ENCODE measurements at regions of chr9 and their contacts with region 1.

Region 1: DNA sequence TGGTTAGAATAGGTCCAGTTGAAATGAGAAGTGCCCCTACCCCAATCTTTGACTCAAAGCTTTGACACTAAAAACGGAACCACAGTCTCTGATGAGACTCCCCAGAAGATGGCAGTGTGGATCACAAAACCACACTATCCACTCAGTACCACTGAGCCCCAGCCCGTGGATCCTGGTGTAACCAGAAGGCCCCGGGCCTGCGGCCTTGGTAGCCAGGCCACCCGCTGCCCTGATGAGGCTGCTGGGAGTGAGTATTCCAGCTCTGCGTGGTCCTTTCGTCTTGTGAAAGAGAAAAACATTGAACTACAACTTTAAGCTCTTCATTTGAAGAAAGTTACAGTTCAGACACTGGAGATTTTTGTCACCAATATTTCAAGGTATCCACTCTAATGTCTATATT is 42.2 kb upstream of the FBP1 start:
- DNase-seq: peak; percentile 67
- H3K4me3 ChIP-seq: no peak overlapping the region
- H3K27ac ChIP-seq: no peak overlapping the region
- H3K4me1 ChIP-seq: no peaks in the 10 kb centered on the region
- H3K27me3 ChIP-seq: peaks cover 3 to 4% of the 10 kb centered on the region in 2 experiments
- CTCF ChIP-seq: peak; percentile 68 to 74
- POLR2A ChIP-seq: no peak

Region 2: DNA sequence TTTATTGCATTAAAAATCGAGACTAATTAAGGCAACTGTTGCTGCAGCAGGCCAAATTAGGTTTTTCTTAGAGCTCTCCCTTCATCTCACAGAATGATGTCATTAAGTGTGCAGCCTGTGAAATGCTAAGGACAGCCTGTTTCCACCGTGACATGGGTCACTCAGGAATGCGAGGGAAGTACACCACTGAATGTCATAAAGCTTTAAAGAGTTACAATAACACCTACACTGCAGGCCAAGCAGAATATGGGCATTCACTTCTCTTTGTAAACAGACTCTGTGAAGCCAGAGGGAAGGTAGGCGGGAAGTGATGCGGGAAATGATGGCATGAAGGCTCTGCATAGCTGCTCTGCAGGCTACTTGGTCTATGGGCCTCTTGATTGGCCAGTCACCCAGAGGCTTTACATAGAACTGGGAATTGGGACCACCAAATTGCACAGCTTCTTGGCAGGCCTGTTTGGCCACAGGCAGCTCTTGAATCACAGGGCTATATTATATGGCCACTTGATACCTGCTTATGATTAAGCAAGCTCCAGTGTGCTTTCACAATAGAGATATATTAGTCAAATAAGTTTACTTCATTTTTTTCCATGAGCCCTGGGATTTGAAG is 16.6 kb after region 1 on chr9:
- CTCF ChIA-PET with region 1: interaction called, 12 read pairs
- POLR2A ChIA-PET with region 1: no interaction called
- dilution Hi-C with region 1: no loop called
- intact Hi-C with region 1: no loop called
- DNase-seq: no peak
- H3K4me3 ChIP-seq: no peak overlapping the region
- H3K27ac ChIP-seq: no peak overlapping the region
- H3K4me1 ChIP-seq: no peaks in the 10 kb centered on the region
- H3K27me3 ChIP-seq: peaks cover 3 to 13% of the 10 kb centered on the region in 2 experiments
- CTCF ChIP-seq: no peak
- POLR2A ChIP-seq: no peak

Region 3: GRCh38 chr9:95025213-95026147 is 344.0 kb after region 1 on chr9:
- CTCF ChIA-PET with region 1: interaction called, 23 read pairs
- POLR2A ChIA-PET with region 1: no interaction called
- dilution Hi-C with region 1: no loop called
- intact Hi-C with region 1: no loop called
- DNase-seq: peak; percentile 89
- H3K4me3 ChIP-seq: peak overlapping the region in 1 of 3 experiments; percentile 20
- H3K27ac ChIP-seq: peak overlapping the region; percentile 7
- H3K4me1 ChIP-seq: peaks cover 38% of the 10 kb centered on the region
- H3K27me3 ChIP-seq: no peaks in the 10 kb centered on the region
- CTCF ChIP-seq: peak in 1 of 2 donors; percentile 33
- POLR2A ChIP-seq: no peak

Region 4: GRCh38 chr9:95073021-95073607 is 391.6 kb after region 1 on chr9:
- CTCF ChIA-PET with region 1: interaction called, 27 read pairs
- POLR2A ChIA-PET with region 1: no interaction called
- dilution Hi-C with region 1: no loop called
- intact Hi-C with region 1: loop called (anchors 1 kb)
- DNase-seq: no peak
- H3K4me3 ChIP-seq: no peak overlapping the region
- H3K27ac ChIP-seq: no peak overlapping the region
- H3K4me1 ChIP-seq: no peaks in the 10 kb centered on the region
- H3K27me3 ChIP-seq: no peaks in the 10 kb centered on the region
- CTCF ChIP-seq: peak in 1 of 2 donors; percentile 44
- POLR2A ChIP-seq: no peak

Region 5: DNA sequence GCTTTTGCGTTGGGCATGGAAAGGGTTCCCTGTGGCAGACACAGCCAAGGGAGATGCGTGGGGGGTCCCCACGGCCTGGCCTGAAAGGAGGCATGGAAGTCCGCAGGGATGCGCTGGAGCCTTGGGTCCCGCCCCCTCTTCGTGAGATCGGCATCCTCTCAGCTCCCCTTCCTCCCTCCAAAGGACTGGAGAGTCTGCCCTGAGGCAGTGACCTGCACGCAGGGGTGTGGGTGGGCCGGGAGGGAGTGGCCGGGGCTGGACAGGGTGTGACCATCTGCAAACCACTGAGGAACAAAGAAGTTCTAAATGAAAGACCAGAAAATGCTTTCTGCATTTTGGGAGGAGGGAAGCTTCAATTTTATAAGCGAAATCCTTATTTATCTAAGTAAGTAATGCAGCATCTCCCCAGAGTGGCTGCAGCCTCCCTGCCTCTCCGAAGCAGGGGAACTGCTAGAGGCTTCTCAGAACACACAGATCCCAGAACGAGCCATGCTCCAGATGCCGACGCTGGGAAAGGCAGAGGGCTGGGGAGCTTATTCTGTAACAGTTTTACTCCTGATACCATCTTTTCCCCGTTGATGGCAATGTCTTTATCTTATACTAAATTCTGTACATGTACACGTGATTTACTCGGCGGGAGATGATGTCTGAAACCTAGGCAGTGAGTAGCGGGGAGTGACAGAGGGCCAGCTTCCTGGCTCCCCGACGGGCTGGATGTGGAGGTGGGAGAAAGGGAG is 414.3 kb after region 1 on chr9:
- CTCF ChIA-PET with region 1: interaction called, 13 read pairs
- POLR2A ChIA-PET with region 1: no interaction called
- dilution Hi-C with region 1: no loop called
- intact Hi-C with region 1: no loop called
- DNase-seq: no peak
- H3K4me3 ChIP-seq: no peak overlapping the region
- H3K27ac ChIP-seq: no peak overlapping the region
- H3K4me1 ChIP-seq: peaks cover 6% of the 10 kb centered on the region
- H3K27me3 ChIP-seq: no peaks in the 10 kb centered on the region
- CTCF ChIP-seq: no peak
- POLR2A ChIP-seq: no peak

Region 6: DNA sequence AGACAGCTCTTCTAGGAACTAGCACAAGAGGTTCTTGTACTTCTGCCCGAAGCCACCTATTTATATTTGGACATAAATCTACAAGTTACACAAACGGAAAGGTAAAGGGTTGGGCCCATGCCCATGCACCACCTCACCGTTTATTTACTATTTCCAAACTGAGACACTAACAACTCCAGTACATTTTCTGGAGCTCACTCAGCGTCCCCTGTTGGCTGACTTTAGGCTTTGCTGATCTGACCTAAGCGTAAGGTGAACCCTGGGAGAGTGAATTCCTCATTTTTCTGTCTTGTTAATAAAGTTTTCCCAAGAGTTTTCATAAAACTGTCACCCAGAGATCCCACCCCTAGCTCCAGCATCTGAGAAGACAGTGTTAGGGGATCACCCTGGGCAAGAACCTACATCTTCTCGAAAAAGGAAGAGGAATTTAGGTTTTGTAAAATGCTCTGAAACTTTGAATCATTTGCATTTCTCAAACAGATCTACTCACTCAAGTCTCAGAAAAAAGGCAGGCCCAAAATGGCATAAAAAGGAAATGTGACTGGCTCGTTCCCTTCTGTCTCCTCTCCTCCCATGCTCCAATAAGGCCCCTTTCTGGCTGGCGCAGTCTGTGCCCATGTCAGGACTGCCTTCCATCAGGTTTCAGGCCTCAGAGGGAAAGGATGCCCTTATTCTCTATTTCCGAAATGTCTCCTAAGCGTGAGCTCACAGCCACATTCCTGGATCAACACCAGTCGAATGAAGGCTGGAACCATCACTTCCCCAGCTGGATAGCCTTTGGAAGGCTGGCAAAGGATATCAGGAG is 434.7 kb after region 1 on chr9:
- CTCF ChIA-PET with region 1: interaction called, 10 read pairs
- POLR2A ChIA-PET with region 1: no interaction called
- dilution Hi-C with region 1: no loop called
- intact Hi-C with region 1: no loop called
- DNase-seq: no peak
- H3K4me3 ChIP-seq: no peak overlapping the region
- H3K27ac ChIP-seq: no peak overlapping the region
- H3K4me1 ChIP-seq: no peaks in the 10 kb centered on the region
- H3K27me3 ChIP-seq: no peaks in the 10 kb centered on the region
- CTCF ChIP-seq: no peak
- POLR2A ChIP-seq: no peak

Region 7: GRCh38 chr9:95268681-95269080 is 587.2 kb after region 1 on chr9:
- CTCF ChIA-PET with region 1: interaction called, 12 read pairs
- POLR2A ChIA-PET with region 1: no interaction called
- dilution Hi-C with region 1: no loop called
- intact Hi-C with region 1: loop called (anchors 1 kb)
- DNase-seq: peak; percentile 47
- H3K4me3 ChIP-seq: no peak overlapping the region
- H3K27ac ChIP-seq: no peak overlapping the region
- H3K4me1 ChIP-seq: no peaks in the 10 kb centered on the region
- H3K27me3 ChIP-seq: no peaks in the 10 kb centered on the region
- CTCF ChIP-seq: peak; percentile 12 to 37
- POLR2A ChIP-seq: no peak